Activated T-helper 2 cell treated with anti-CD3 and anti-CD28 coated beads, Interferon-gamma antibody, Interleukin-2, Interleukin-4, amounts not matched to agents 10 μg/mL and 5 μg/mL and 100 μg/mL, durations not matched to agents 14 hours and 24 hours and 36 hours (primary cell): ENCODE measurements at regions of chr4 and their contacts with region 1.

Region 1: DNA sequence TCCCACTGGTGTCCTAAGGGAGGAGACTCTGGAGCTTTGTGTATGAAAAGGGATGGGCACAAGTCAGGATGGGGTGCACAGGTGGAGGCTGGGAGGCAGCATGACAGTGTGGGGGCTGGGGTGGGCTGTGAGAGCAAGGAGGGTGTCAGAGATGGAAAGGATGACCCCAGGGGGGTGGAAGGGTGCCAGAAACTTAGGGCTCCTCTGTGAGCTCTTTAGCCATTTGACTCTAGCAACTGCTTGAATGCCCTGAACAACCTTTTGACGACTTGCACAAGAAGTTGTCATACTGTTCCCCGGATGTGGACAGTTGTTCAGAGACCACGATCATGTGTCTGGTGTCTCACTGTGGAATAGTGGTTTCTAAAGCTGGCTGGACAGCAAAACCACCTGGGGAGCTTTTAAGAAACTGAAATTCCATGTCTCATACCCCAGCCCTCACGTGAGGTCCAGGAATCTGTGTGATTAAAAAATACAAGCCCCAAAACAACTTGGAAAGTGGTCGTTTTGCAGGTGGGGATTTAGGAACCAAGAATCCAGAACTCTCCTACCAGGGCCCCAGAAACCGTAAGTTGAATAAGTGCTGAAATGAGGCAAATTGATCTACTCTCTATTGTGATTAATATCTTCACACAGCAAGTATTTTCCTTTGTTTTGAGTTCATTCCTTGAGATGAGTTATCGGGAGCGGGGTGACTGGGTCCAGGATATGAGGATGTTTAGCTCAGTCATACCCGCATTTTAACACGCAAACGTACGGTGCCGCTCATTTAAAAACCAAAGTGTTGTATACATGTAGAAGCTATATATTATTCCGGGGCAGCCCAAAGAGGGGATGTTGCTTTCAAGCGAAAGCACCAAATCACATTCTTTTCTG is 3.4 kb downstream of the RHOH start:
- DNase-seq: peak; percentile 74
- H3K4me3 Mint-ChIP-seq: peak overlapping the region; percentile 90
- H3K27ac Mint-ChIP-seq: peak overlapping the region; percentile 94
- H3K4me1 Mint-ChIP-seq: peaks cover 52% of the 10 kb centered on the region
- H3K27me3 Mint-ChIP-seq: no peaks in the 10 kb centered on the region

Region 2: DNA sequence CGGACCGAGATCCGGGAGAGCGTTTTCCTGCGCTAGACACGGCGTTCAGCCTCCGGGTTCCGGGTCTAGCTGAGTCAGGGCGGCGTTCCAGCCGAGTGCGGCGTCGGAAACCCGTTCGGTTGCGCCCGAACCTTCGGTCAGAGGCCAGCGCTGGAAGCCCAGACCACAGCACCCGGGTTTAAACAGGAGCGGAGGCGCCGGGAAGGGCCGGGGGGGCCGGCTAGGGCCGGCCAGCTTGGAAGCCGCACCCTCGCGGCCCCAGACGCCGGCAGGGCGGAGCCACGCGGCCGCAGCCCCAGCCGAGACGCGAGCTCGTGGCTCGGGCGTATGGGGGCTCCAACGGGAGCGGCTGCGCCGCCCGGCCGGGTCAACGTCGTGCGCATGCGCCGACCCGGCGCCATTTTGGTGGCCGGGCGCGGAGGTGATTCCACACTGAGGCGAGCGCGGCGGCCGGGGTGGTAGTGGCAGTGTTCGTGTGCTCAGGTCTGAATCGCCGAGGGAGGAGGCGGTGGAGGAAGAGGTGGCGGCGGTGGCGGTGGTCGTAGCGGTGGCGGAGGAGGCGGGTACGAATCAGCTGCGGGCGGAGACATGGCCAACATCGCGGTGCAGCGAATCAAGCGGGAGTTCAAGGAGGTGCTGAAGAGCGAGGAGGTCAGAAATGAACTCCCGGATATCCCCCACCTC is 502.4 kb before region 1 on chr4 and contains the start of gene UBE2K:
- intact Hi-C with region 1: loop called (anchors 5 kb)
- DNase-seq: peak; percentile 87
- H3K4me3 Mint-ChIP-seq: peak within 1 kb of the TSS; percentile 99
- H3K27ac Mint-ChIP-seq: peak within 1 kb of the TSS; percentile 98
- H3K4me1 Mint-ChIP-seq: peaks cover 25% of the 10 kb centered on the region
- H3K27me3 Mint-ChIP-seq: no peaks in the 10 kb centered on the region
- total RNA-seq, gene UBE2K: 94.1 and 94.8 TPM in 2 replicates

Region 3: GRCh38 chr4:40020221-40020943 is 179.9 kb before region 1 on chr4:
- intact Hi-C with region 1: no loop called
- DNase-seq: no peak
- H3K4me3 Mint-ChIP-seq: no peak overlapping the region
- H3K27ac Mint-ChIP-seq: no peak overlapping the region
- H3K4me1 Mint-ChIP-seq: no peaks in the 10 kb centered on the region
- H3K27me3 Mint-ChIP-seq: peaks cover 1% of the 10 kb centered on the region

Region 4: DNA sequence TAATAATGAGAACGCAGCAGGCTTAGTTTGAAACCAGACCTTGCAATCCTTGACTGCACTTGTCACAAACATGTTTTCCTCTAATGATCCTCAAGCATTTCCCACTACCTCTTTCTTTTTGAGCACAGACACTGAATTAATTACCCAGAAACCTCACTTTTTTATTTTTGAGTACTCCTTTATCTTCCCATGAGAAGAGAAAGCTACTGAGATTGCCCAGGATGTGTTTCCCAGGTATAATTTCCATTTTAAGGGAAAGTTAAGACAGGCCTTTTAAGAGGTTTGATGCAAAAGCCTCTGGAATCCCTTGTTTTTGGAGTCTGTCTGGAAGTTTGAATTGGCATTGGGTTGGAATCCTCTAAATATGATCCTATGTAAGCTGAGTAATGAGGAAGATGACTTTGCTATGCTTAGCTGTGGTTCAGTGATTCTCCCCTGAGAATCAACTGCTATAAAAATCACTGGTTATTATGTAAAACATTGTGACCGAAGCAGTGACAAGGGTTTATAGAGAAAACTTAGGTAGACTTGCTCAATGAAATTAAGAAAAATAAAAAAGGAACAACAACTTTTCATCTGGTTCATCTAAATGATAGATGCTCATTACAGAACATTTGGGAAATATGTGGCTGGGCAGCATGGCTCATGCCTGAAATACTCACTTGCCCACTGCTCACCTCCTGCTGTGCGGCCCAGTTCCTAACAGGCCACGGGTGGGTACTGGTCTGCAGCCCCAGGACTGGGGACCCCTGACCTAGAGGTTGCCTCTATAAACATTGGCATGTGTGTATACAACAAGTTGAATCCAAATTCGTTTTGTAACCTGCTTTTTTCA is 14.2 kb before region 1 on chr4:
- intact Hi-C with region 1: loop called (anchors 1 kb)
- DNase-seq: no peak
- H3K4me3 Mint-ChIP-seq: no peak overlapping the region
- H3K27ac Mint-ChIP-seq: no peak overlapping the region
- H3K4me1 Mint-ChIP-seq: peaks cover 58% of the 10 kb centered on the region
- H3K27me3 Mint-ChIP-seq: no peaks in the 10 kb centered on the region

Region 5: GRCh38 chr4:40255393-40256281 is 55.4 kb after region 1 on chr4:
- intact Hi-C with region 1: loop called (anchors 2 kb)
- DNase-seq: no peak
- H3K4me3 Mint-ChIP-seq: peak overlapping the region; percentile 15
- H3K27ac Mint-ChIP-seq: peak overlapping the region; percentile 85
- H3K4me1 Mint-ChIP-seq: peaks cover 52% of the 10 kb centered on the region
- H3K27me3 Mint-ChIP-seq: no peaks in the 10 kb centered on the region

Region 6: GRCh38 chr4:40369437-40370274 is 169.4 kb after region 1 on chr4:
- intact Hi-C with region 1: no loop called
- DNase-seq: no peak
- H3K4me3 Mint-ChIP-seq: no peak overlapping the region
- H3K27ac Mint-ChIP-seq: no peak overlapping the region
- H3K4me1 Mint-ChIP-seq: peaks cover 4% of the 10 kb centered on the region
- H3K27me3 Mint-ChIP-seq: peaks cover 6% of the 10 kb centered on the region

Region 7: DNA sequence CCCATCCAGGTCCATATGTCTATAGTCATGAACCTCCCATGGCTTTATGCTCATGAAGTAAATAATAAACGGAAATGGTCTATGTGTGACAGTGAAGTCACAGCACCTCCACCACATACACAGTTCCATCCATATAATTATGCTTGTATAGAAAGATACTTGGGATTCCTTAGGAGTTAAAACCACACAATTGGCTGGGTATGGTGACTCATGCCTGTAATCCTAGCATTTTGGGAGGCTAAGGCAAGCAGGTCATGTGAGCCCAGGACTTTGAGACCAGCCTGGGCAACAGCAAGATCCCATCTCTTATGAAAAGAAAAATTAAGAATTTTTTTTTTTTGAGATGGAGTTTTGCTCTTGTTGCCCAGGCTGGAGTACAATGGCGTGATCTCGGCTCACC is 485.1 kb after region 1 on chr4:
- intact Hi-C with region 1: loop called (anchors 10 kb)
- DNase-seq: no peak
- H3K4me3 Mint-ChIP-seq: no peak overlapping the region
- H3K27ac Mint-ChIP-seq: no peak overlapping the region
- H3K4me1 Mint-ChIP-seq: peaks cover 45% of the 10 kb centered on the region
- H3K27me3 Mint-ChIP-seq: no peaks in the 10 kb centered on the region